ENCODE measurements at regions of chr1 and their contacts with region 1.

Region 1: DNA sequence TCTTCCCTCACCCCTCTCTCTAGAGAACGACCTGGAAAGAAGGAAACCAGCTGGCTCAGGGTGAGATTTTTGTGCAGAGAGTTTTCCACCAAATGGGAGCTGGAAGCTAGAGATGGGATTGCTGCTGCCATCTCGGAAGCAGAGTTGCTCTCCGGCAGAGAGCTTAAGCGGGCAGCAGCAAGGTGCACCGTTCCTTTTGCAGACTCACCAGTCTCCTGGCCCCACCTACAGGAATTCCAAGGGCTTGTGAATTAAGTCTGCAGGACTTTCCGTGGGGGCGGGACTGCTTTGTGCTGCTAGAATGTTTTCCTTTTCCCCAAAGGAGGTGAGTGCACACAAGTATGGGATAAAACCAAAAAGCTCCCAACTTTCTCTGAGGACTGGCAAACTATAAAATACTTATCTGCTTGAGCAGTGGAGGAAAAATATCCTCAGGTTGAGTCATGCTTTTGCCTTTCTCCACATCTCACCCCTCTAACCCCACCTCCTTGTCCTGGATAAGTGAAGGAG is 29.1 kb upstream of the KIAA0040 start:
- DNase-seq: peak; percentile 67
- H3K4me3 ChIP-seq: no peak overlapping the region
- H3K27ac ChIP-seq: peak overlapping the region in 1 of 5 donors; percentile 44
- H3K4me1 ChIP-seq: peaks cover 0 to 30% (median 8%) of the 10 kb centered on the region in 4 donors
- H3K27me3 ChIP-seq: no peaks in the 10 kb centered on the region
- CTCF ChIP-seq: peak in 2 of 7 experiments; percentile 18 to 43
- EP300 ChIP-seq: no peak
- POLR2A ChIP-seq: no peak

Region 2: GRCh38 chr1:174815036-174815435 is 406.7 kb before region 1 on chr1:
- intact Hi-C with region 1: no loop called
- DNase-seq: no peak
- H3K4me3 ChIP-seq: no peak overlapping the region
- H3K27ac ChIP-seq: no peak overlapping the region
- H3K4me1 ChIP-seq: peaks cover 0 to 3% (median 0%) of the 10 kb centered on the region in 4 donors
- H3K27me3 ChIP-seq: no peaks in the 10 kb centered on the region
- CTCF ChIP-seq: no peak
- EP300 ChIP-seq: no peak
- POLR2A ChIP-seq: no peak

Region 3: DNA sequence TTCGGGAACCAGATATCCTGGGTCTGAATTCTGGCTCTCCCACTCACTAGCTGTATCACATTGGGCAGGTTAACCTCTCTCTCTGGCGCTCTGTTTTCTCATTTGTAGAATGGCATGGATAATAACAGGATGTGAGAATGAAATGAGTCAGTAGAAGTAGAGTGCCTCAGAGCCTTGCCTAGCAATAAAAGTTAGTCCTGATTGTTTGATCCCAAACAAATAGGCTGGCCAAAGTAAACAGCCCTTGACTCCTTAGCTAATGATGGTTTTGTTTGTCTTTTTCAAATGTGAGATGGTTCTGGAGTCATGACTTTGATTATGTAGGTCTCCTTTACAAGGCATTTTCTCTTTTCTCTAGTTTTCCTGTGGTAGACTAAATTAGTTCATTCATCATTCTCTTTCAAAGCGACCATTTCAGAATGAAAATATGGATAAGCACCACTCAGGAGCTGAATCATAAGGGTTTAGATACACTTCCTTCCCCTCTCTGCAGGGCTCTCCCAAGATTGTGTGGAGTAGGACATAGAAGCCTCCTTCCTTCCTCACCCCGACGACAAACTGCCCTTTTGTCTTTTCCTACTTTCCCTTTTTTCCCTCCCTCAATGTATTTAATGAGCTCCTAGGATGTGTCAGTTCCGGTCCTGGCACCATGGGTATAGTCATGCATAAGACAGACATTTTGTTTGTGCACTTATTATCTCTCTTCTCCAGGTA is 52.3 kb before region 1 on chr1:
- intact Hi-C with region 1: loop called (anchors 10 kb)
- DNase-seq: no peak
- H3K4me3 ChIP-seq: no peak overlapping the region
- H3K27ac ChIP-seq: peak overlapping the region in 2 of 5 donors; percentile 40 to 49
- H3K4me1 ChIP-seq: peaks cover 8 to 42% (median 13%) of the 10 kb centered on the region in 4 donors
- H3K27me3 ChIP-seq: no peaks in the 10 kb centered on the region
- CTCF ChIP-seq: no peak
- EP300 ChIP-seq: no peak
- POLR2A ChIP-seq: no peak

Region 4: GRCh38 chr1:175628548-175629317 is 407.0 kb after region 1 on chr1:
- intact Hi-C with region 1: no loop called
- DNase-seq: no peak
- H3K4me3 ChIP-seq: no peak overlapping the region
- H3K27ac ChIP-seq: no peak overlapping the region
- H3K4me1 ChIP-seq: no peaks in the 10 kb centered on the region
- H3K27me3 ChIP-seq: no peaks in the 10 kb centered on the region
- CTCF ChIP-seq: no peak
- EP300 ChIP-seq: no peak
- POLR2A ChIP-seq: no peak

Measured in stomach (tissue), 19 donors.